HCT116 (cell line): ENCODE measurements at regions of chr20 and their contacts with region 1.

Region 1: DNA sequence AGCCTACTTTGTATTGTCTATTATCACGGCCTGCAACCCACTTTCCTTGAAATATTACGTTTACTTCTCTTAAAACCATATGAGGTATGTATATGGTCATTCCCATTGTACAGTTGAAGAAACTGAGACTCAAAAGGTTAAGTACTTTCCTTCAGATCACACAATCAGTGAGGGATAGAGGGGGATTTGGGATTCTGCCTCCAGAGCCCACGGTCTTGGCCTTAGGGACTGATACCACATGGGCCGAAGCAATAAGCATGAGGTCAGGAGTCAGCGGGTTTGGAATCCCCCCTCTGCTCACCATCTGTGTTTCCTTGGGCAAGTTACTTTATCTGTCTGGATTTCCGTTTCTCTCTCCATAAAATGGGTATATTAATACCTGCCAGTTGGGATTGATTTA is 19.4 kb upstream of the EPB41L1 start:
- DNase-seq: no peak
- ATAC-seq: no peak
- H3K4me3 ChIP-seq: no peak overlapping the region
- H3K27ac ChIP-seq: no peak overlapping the region
- H3K4me1 ChIP-seq: peaks cover 5 to 22% of the 10 kb centered on the region in 2 experiments; a peak in 3 of 4 replicates
- H3K27me3 ChIP-seq: no peaks in the 10 kb centered on the region
- CTCF ChIP-seq: no peak
- POLR2A ChIP-seq: no peak
- RAD21 ChIP-seq: no peak

Region 2: GRCh38 chr20:36050436-36051317 is 84.5 kb before region 1 on chr20:
- CTCF ChIA-PET with region 1: interaction called, 4 read pairs
- POLR2A ChIA-PET with region 1: no interaction called
- RAD21 ChIA-PET with region 1: no interaction called
- intact Hi-C with region 1: loop called (anchors 5 kb)
- DNase-seq: peak; percentile 62
- ATAC-seq: peak; percentile 95
- H3K4me3 ChIP-seq: peak overlapping the region; percentile 77 to 89
- H3K27ac ChIP-seq: peak overlapping the region; percentile 92
- H3K4me1 ChIP-seq: peaks cover 0 to 15% of the 10 kb centered on the region in 2 experiments; a peak in 2 of 4 replicates
- H3K27me3 ChIP-seq: no peaks in the 10 kb centered on the region
- CTCF ChIP-seq: no peak
- POLR2A ChIP-seq: peak; percentile 85
- RAD21 ChIP-seq: no peak